K562 (cell line): ENCODE measurements at regions of chr7 and their contacts with region 1.

Region 1: DNA sequence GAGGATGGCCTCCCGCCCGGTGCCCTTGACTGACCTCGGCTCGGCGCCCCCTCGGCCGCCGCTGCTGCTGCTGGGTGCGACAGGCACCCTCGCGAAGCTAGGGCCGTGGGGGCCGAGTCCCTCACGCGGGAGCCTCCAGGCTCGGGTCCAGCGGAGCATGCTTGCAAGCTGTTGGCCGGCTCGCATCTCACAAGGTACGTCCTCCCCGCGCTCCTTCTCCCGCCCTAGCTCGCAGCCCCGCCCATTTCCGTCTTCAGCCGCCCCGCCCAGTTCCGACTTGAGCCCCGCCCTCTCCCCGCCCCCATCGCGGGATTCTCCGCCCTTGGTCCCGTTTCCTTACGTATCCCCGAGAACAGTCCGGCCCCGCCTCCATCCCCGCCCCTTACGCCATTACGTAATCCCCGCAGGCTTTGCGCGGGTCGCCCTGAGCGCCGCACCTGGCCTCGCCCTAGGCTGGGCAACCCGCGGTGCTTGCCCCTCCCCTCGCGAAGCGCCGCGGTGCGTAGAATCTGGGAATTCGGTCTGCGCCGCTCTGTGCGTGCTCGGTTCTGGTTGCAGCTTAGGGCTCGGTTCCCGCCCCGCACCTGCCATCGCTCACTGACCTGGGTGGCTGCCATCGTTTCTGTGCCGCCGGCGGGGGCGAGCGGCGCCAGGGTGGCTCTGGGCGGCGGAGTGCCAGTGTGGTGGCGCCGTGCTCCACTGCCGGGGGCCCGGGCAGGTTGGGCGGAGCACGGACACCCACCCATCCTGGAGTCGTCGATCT is at the start of gene ABHD11:
- DNase-seq: peak; percentile 99
- ATAC-seq: peak; percentile 90
- H3K4me3 ChIP-seq: peak within 1 kb of the TSS; percentile 62
- H3K27ac ChIP-seq: peak within 1 kb of the TSS; percentile 91
- H3K4me1 ChIP-seq: peaks cover 2 to 58% of the 10 kb centered on the region in 2 experiments; a peak in 4 of 5 replicates
- H3K27me3 ChIP-seq: no peaks in the 10 kb centered on the region
- CTCF ChIP-seq: peak in 1 of 3 experiments; percentile 12; a peak in 1 of 6 replicates
- EP300 ChIP-seq: no peak
- POLR2A ChIP-seq: peak; percentile 93
- RAD21 ChIP-seq: peak; percentile 21 to 28; a peak in 3 of 4 replicates
- polyA plus RNA-seq, gene ABHD11: 7.7 to 8.6 TPM

Region 2: DNA sequence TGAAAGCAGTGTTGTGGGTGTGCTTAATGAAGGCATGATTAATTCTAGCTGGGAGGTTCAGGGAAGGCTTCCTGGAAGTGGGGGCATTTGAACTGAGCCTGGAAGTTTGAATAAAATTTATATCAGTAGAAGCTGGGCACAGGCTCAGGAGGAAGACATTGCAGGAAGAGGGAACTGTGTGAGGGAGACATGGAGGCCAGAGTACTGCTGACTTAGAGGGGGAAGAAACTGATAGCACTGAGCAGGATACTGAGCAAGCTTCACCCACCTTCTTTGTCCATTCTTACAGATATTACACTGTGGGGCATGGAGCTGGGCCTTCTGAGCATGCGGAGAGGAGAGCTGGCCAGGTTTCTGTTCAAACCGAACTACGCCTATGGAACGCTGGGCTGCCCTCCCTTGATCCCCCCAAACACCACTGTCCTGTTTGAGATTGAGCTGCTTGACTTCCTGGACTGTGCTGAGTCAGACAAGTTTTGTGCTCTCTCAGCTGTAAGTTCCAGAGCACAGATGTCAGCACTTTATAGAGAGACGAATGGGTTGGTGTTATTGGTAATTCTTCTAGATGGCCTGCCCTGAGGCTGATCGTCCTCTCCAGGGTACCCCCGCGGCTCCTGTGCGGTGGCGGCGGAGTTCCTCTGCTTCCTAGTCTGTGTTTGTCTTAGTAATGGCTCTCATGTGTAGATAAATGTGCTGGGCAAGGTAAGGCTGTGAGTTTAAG is 408.8 kb before region 1 on chr7:
- CTCF ChIA-PET with region 1: no interaction called
- POLR2A ChIA-PET with region 1: no interaction called
- in situ Hi-C with region 1: loop called (anchors 10 kb)
- intact Hi-C with region 1: loop called (anchors 10 kb)
- DNase-seq: no peak
- ATAC-seq: peak; percentile 47; the same call in 2 of the 3 replicates
- H3K4me3 ChIP-seq: no peak overlapping the region
- H3K27ac ChIP-seq: no peak overlapping the region
- H3K4me1 ChIP-seq: no peaks in the 10 kb centered on the region
- H3K27me3 ChIP-seq: peaks cover 43 to 53% of the 10 kb centered on the region in 2 experiments
- CTCF ChIP-seq: no peak
- EP300 ChIP-seq: no peak
- POLR2A ChIP-seq: no peak
- RAD21 ChIP-seq: no peak

Region 3: GRCh38 chr7:73606801-73607691 is 131.7 kb before region 1 on chr7:
- CTCF ChIA-PET with region 1: interaction called, 6 read pairs
- POLR2A ChIA-PET with region 1: interaction called, 3 read pairs
- in situ Hi-C with region 1: loop called (anchors 5 kb)
- intact Hi-C with region 1: no loop called
- DNase-seq: peak; percentile 78 to 89 (median 88)
- ATAC-seq: peak; percentile 85
- H3K4me3 ChIP-seq: no peak overlapping the region
- H3K27ac ChIP-seq: no peak overlapping the region
- H3K4me1 ChIP-seq: peaks cover 0 to 30% of the 10 kb centered on the region in 2 experiments; a peak in 2 of 5 replicates
- H3K27me3 ChIP-seq: no peaks in the 10 kb centered on the region
- CTCF ChIP-seq: peak; percentile 93 to 98 (median 97)
- EP300 ChIP-seq: no peak
- POLR2A ChIP-seq: no peak
- RAD21 ChIP-seq: peak; percentile 86 to 95

Region 4: GRCh38 chr7:73667344-73668102 is 71.3 kb before region 1 on chr7 and contains the start of gene VPS37D:
- CTCF ChIA-PET with region 1: no interaction called
- POLR2A ChIA-PET with region 1: interaction called, 3 read pairs
- in situ Hi-C with region 1: no loop called
- intact Hi-C with region 1: loop called (anchors 5 kb)
- DNase-seq: peak; percentile 97 to 99 (median 99)
- ATAC-seq: peak; percentile 96
- H3K4me3 ChIP-seq: peak within 1 kb of the TSS; percentile 53
- H3K27ac ChIP-seq: no peak within 1 kb of the TSS
- H3K4me1 ChIP-seq: peaks cover 9 to 42% of the 10 kb centered on the region in 2 experiments
- H3K27me3 ChIP-seq: no peaks in the 10 kb centered on the region
- CTCF ChIP-seq: peak; percentile 48 to 96 (median 91)
- EP300 ChIP-seq: no peak
- POLR2A ChIP-seq: no peak
- RAD21 ChIP-seq: peak; percentile 86 to 88
- polyA plus RNA-seq, gene VPS37D: not detected

Region 5: DNA sequence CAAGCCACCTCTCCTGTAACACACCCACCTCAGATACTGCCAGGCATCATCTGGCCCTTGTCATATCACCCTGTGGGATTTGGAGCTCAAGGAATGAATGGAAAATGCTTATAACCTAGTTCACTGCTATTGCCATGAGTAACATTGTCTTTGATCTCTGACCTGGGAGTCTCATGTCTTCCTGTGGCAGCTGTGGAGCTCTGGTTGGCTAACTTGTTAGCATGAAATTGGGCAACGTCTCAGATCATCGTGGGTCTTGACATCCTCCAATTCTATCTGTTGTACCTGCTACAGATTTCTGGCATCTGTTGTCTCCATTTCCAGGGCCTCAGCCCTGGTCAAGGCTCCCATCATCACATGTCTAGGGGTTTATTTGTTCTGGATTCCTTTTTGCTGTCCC is 120.0 kb after region 1 on chr7:
- CTCF ChIA-PET with region 1: no interaction called
- POLR2A ChIA-PET with region 1: no interaction called
- in situ Hi-C with region 1: loop called (anchors 5 kb)
- intact Hi-C with region 1: loop called (anchors 2 kb)
- DNase-seq: no peak
- ATAC-seq: no peak
- H3K4me3 ChIP-seq: no peak overlapping the region
- H3K27ac ChIP-seq: no peak overlapping the region
- H3K4me1 ChIP-seq: peaks cover 3 to 7% of the 10 kb centered on the region in 2 experiments; a peak in 3 of 5 replicates
- H3K27me3 ChIP-seq: peaks cover 14 to 49% of the 10 kb centered on the region in 2 experiments; a peak in 4 of 5 replicates
- CTCF ChIP-seq: no peak
- EP300 ChIP-seq: no peak
- POLR2A ChIP-seq: no peak
- RAD21 ChIP-seq: no peak